Transverse colon (tissue), 4 donors: ENCODE measurements at regions of chr7 and their contacts with region 1.

Region 1: GRCh38 chr7:2680792-2681490 is 7.1 kb upstream of the AMZ1 start:
- DNase-seq: peak; percentile 85
- H3K4me3 ChIP-seq: no peak overlapping the region
- H3K27ac ChIP-seq: no peak overlapping the region
- H3K4me1 ChIP-seq: peaks cover 0 to 6% (median 0%) of the 10 kb centered on the region in 4 donors
- H3K27me3 ChIP-seq: peaks cover 51% of the 10 kb centered on the region
- CTCF ChIP-seq: peak; percentile 59 to 77 (median 71)
- EP300 ChIP-seq: no peak
- POLR2A ChIP-seq: no peak

Region 2: GRCh38 chr7:2451171-2452073 is 229.5 kb before region 1 on chr7:
- in situ Hi-C with region 1: loop called in 2 of 4 experiments (anchors 25 kb)
- intact Hi-C with region 1: no loop called
- DNase-seq: peak; percentile 89
- H3K4me3 ChIP-seq: peak overlapping the region in 3 of 4 donors; percentile 17 to 36 (median 35)
- H3K27ac ChIP-seq: peak overlapping the region in 1 of 4 donors; percentile 29
- H3K4me1 ChIP-seq: peaks cover 0 to 12% (median 12%) of the 10 kb centered on the region in 4 donors
- H3K27me3 ChIP-seq: no peaks in the 10 kb centered on the region
- CTCF ChIP-seq: peak; percentile 79 to 92 (median 87)
- EP300 ChIP-seq: no peak
- POLR2A ChIP-seq: no peak

Region 3: DNA sequence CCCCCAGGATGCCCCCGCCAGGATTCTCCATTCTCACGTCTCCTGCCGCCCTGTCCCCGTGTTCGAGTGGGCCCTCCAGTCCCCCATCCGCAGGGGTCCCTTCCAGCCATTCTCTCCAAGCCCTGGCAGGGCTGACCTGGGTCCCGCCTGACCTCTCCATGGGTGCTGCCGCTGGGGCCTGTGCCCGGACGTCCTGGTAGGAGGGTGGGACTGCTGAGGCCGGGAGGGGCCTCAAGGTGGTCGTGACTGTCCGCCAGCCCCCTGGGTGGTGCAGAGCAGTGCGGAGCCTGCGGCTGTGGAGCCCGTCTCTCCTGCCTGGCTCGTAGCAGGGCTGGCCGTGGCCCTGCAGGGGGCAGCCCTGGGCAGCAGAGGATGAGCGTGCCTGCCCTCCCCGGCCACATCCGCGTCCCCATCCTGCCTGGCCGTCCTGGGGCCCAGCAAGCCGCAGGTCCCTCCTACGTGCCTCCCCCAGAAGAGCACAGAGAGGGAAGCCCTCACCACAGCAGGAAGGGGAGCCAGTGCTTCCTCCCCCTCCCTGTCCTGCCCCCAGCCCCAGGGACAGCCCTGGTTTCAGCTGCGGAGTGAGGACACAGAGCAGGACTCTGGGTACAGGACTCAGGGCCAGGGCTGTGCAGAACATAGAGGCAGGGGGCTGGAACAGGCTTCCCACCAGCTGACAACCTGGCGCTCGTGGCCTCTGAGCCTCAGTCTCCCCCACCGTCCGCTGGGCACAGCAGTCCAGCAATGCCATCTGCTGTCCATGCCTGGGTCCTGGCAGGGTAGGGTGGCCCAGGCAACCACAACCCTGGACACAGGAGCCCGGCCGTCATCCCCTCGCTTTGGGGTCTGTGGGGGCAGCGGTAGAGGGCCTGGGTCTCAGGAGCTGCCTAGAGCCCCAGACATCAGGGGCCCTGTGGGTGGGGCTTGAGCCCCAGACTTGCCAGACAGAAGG is 203.2 kb before region 1 on chr7:
- in situ Hi-C with region 1: loop called in 3 of 4 experiments (anchors 25 kb)
- intact Hi-C with region 1: no loop called
- DNase-seq: peak; percentile 74
- H3K4me3 ChIP-seq: no peak overlapping the region
- H3K27ac ChIP-seq: peak overlapping the region in 2 of 4 donors; percentile 24 to 28
- H3K4me1 ChIP-seq: peaks cover 15 to 18% (median 16%) of the 10 kb centered on the region in 4 donors
- H3K27me3 ChIP-seq: peaks cover 16% of the 10 kb centered on the region
- CTCF ChIP-seq: peak; percentile 66 to 91 (median 70)
- EP300 ChIP-seq: no peak
- POLR2A ChIP-seq: no peak